Ovary (tissue), 10 donors: ENCODE measurements at regions of chr20 and their contacts with region 1.

Region 1: DNA sequence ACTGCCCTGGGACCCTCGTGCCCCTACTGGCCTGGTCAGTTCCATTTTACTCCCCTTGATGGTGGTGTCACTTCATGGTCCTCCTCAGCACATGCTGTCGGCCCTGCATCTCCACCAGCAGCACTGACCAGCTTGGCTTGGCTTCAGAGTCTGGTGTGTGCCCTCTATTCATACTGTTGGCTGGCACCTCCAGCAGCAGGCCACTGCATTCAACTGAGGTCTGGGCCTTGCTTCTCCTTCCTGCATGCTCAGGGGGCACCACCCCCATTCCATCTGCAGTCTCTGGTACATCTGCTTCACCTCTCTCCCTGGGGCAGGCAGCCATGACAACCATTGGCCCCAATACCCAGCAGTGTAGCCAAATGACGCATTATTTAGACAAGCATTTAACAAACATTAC is 155.9 kb downstream of the SLC24A3 start:
- DNase-seq: no peak
- H3K4me3 ChIP-seq: no peak overlapping the region
- H3K27ac ChIP-seq: no peak overlapping the region
- H3K4me1 ChIP-seq: peaks cover 3% of the 10 kb centered on the region
- H3K27me3 ChIP-seq: no peaks in the 10 kb centered on the region
- CTCF ChIP-seq: no peak
- EP300 ChIP-seq: no peak
- POLR2A ChIP-seq: no peak

Region 2: DNA sequence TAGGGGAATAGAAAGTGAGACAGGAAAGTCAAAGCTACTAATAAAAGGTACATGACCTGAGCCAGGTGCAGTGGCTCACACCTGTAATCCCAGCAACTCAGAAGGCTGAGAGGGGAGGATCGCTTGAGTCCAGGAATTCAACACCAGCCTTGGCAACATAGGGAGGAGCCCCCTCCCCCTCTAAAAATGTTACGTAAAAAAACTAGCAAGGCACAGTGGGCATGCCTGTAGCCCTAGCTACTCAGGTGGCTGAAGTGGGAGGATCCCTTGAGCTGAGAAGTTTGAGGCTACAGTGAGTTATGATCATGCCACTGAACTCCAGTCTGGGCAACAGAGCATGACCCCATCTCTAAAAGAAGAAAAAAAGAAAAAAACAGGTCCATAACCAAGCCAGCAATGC is 203.6 kb after region 1 on chr20:
- intact Hi-C with region 1: loop called in 1 of 4 experiments (anchors 10 kb)
- DNase-seq: no peak
- H3K4me3 ChIP-seq: no peak overlapping the region
- H3K27ac ChIP-seq: no peak overlapping the region
- H3K4me1 ChIP-seq: no peaks in the 10 kb centered on the region
- H3K27me3 ChIP-seq: no peaks in the 10 kb centered on the region
- CTCF ChIP-seq: no peak
- EP300 ChIP-seq: no peak
- POLR2A ChIP-seq: no peak

Region 3: GRCh38 chr20:20489054-20489453 is 1120.7 kb after region 1 on chr20:
- intact Hi-C with region 1: no loop called
- DNase-seq: no peak
- H3K4me3 ChIP-seq: no peak overlapping the region
- H3K27ac ChIP-seq: no peak overlapping the region
- H3K4me1 ChIP-seq: no peaks in the 10 kb centered on the region
- H3K27me3 ChIP-seq: no peaks in the 10 kb centered on the region
- CTCF ChIP-seq: no peak
- EP300 ChIP-seq: no peak
- POLR2A ChIP-seq: no peak